Activated T-helper 2 cell treated with anti-CD3 and anti-CD28 coated beads, Interferon-gamma antibody, Interleukin-2, Interleukin-4, amounts not matched to agents 10 μg/mL and 5 μg/mL and 100 μg/mL, durations not matched to agents 14 hours and 24 hours and 36 hours (primary cell): ENCODE measurements at regions of chr4 and their contacts with region 1.

Region 1: DNA sequence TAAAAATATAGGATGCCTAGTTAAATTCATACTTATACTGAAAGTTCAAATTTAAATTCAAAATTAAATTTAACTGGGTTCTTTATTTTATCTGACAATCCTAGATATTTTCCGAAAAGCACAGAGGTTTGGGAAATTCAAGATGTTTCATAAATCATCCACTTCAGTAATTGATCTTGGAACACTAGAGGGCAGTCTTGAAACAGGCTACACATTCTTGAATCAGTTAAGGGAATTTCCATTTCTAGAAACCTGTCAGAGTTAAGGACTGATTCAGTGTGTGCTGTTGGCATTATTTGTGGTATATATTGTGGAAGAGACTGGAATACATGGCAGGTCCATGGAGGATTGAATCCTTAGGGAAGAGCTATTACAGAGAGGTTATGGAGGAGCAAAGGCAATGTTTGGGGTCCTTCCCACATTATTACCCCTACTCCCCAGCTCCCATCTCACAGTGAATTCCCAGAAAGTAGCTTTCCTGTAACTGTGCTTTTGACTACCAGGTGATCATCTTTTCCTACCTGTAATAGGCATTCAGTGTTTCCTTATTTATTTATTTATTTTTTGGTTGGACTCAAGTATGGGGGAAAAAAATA is 92.9 kb downstream of the EGF start:
- DNase-seq: no peak
- H3K4me3 Mint-ChIP-seq: no peak overlapping the region
- H3K27ac Mint-ChIP-seq: no peak overlapping the region
- H3K4me1 Mint-ChIP-seq: peaks cover 13% of the 10 kb centered on the region
- H3K27me3 Mint-ChIP-seq: peaks cover 10% of the 10 kb centered on the region

Region 2: DNA sequence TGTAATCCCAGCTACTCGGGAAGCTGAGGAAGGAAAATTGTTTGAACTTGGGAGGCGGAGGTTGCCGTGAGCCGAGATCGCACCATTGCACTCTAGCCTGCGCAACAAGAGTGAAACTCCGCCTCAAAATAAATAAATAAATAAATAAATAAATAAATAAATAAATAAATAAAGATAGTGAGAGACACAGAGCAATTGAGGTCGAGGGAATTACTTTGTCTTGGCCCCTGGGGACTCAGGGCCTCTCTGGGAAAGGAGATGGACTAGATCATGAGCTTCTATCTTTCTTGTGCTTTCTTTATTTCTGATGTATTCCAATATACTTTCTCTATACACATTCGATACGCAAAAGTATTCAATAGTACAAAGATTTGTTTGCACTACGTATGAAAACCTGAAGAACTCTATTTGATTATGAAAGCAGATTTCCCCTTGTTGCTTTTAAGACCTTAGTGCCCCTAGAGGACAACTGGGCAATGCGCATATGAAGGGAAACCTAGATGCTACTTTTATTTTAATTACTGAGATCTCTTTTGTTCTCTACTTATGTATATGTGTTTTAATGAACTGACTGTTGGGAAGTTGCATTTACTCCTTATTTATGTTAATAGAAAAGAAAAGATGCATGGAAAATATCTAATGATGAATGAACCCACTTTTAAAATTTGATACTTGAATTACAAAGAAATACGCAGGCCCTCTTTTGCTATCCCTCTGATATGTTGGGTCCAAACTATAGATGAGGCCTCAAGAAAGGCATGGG is 205.6 kb after region 1 on chr4:
- intact Hi-C with region 1: loop called (anchors 2 kb)
- DNase-seq: no peak
- H3K4me3 Mint-ChIP-seq: no peak overlapping the region
- H3K27ac Mint-ChIP-seq: no peak overlapping the region
- H3K4me1 Mint-ChIP-seq: peaks cover 2% of the 10 kb centered on the region
- H3K27me3 Mint-ChIP-seq: peaks cover under 1% of the 10 kb centered on the region

Region 3: GRCh38 chr4:110310795-110311194 is 305.2 kb after region 1 on chr4:
- intact Hi-C with region 1: loop called (anchors 5 kb)
- DNase-seq: no peak
- H3K4me3 Mint-ChIP-seq: no peak overlapping the region
- H3K27ac Mint-ChIP-seq: no peak overlapping the region
- H3K4me1 Mint-ChIP-seq: no peaks in the 10 kb centered on the region
- H3K27me3 Mint-ChIP-seq: peaks cover 19% of the 10 kb centered on the region